CD14-positive monocyte (primary cell): ENCODE measurements at regions of chr1 and their contacts with region 1.

Region 1: GRCh38 chr1:41274752-41275545 is 32.8 kb upstream of the SCMH1 start:
- DNase-seq: peak; percentile 80 to 94 (median 86)
- H3K4me3 ChIP-seq: peak overlapping the region in 1 of 3 experiments; percentile 51
- H3K4me3 Mint-ChIP-seq: peak overlapping the region; percentile 1 to 80
- H3K27ac ChIP-seq: peak overlapping the region; percentile 80 to 82
- H3K27ac Mint-ChIP-seq: peak overlapping the region; percentile 84 to 97 (median 90)
- H3K4me1 ChIP-seq: peaks cover 56 to 58% of the 10 kb centered on the region in 2 donors
- H3K4me1 Mint-ChIP-seq: peaks cover 56% of the 10 kb centered on the region
- H3K27me3 ChIP-seq: no peaks in the 10 kb centered on the region
- H3K27me3 Mint-ChIP-seq: peaks cover 0 to 3% (median 1%) of the 10 kb centered on the region in 3 donors
- CTCF ChIP-seq: no peak

Region 2: GRCh38 chr1:40884055-40884795 is 390.7 kb before region 1 on chr1:
- intact Hi-C with region 1: no loop called
- DNase-seq: no peak
- H3K4me3 ChIP-seq: peak overlapping the region in 2 of 3 experiments; percentile 12 to 55
- H3K4me3 Mint-ChIP-seq: peak overlapping the region; percentile 64 to 76
- H3K27ac ChIP-seq: no peak overlapping the region
- H3K27ac Mint-ChIP-seq: no peak overlapping the region
- H3K4me1 ChIP-seq: peaks cover 4 to 9% of the 10 kb centered on the region in 2 donors
- H3K4me1 Mint-ChIP-seq: peaks cover 14% of the 10 kb centered on the region
- H3K27me3 ChIP-seq: peaks cover 17 to 35% of the 10 kb centered on the region in 2 donors
- H3K27me3 Mint-ChIP-seq: peaks cover 38 to 49% (median 41%) of the 10 kb centered on the region in 3 donors
- CTCF ChIP-seq: no peak

Region 3: DNA sequence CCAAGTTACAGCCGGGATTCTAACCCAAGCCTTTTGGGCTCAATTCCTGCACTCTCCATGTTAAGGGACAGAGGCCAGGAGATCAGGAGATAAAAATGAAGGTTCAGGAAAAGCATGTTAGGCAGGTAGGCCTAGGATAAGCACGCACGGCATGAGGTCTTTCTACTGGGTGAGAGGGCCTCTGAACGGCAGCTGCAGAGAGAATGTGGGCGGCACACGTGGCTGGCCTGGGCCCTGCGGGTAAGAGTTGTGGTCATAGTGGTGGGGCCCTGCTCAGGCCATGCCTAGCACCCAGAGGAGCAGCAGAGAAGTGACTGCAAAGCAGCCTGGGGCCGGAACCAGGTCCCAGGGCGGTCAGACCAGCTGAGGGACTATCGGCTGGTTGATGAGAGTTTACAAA is 78.8 kb after region 1 on chr1:
- intact Hi-C with region 1: loop called in 1 of 2 experiments (anchors 10 kb)
- DNase-seq: no peak
- H3K4me3 ChIP-seq: no peak overlapping the region
- H3K4me3 Mint-ChIP-seq: no peak overlapping the region
- H3K27ac ChIP-seq: no peak overlapping the region
- H3K27ac Mint-ChIP-seq: peak overlapping the region in 1 of 7 donors; percentile 16
- H3K4me1 ChIP-seq: peaks cover 0 to 11% of the 10 kb centered on the region in 2 donors
- H3K4me1 Mint-ChIP-seq: peaks cover 11% of the 10 kb centered on the region
- H3K27me3 ChIP-seq: peaks cover 0 to 6% of the 10 kb centered on the region in 2 donors
- H3K27me3 Mint-ChIP-seq: peaks cover 12 to 28% (median 20%) of the 10 kb centered on the region in 3 donors
- CTCF ChIP-seq: no peak